ENCODE measurements at regions of chr3 and their contacts with region 1.

Region 1: GRCh38 chr3:187739561-187740332 is 5.5 kb downstream of the BCL6 start:
- DNase-seq: peak; percentile 88
- ATAC-seq: peak; percentile 18

Region 2: GRCh38 chr3:187783098-187783497 is 43.4 kb after region 1 on chr3:
- intact Hi-C with region 1: no loop called
- DNase-seq: peak; percentile 54
- ATAC-seq: peak; percentile 96

Region 3: GRCh38 chr3:187802928-187803259 is 63.1 kb after region 1 on chr3:
- intact Hi-C with region 1: no loop called
- DNase-seq: no peak
- ATAC-seq: no peak

Region 4: DNA sequence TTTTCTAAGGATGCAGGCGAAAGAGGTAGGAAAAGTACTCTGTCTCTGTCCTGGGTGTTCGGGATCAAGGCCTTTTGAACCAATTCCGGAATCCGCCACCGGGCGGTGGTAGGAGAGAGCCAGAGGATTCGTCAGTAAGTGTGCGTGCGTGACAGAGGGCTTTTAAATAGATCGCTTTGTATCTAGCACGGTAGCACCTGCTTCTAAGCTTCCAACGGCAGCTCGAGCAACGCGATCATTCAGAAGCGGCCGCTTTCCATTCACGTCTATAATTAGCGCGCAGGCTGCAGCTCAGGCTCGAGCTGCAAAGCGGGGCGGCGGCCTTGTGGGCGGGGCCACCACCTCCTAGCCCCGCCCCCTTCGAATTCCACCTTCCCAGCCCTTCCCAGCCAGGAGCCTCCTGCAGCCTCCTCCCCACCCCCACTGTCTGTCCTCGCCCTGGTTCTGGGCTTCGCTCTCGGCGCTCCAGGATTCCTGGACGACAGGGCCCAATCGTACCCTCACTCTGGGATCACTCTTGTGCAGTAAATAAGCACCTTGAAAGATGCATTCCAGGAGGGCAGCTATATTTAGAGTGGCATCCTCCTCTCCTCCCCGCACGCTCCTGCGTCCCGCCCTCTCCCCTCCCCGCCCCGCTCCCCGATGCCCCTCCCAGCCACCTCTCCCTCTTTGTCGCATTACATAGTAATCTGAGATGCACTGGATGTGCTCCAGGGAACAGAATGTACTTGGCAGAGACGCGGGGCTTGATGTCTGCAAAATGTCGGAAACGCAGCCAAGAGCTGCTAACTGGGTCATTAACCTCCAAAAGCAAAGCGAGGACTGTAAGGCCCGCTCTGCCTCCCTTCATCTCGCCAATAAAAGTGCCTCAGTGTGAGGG is 1207.9 kb after region 1 on chr3:
- intact Hi-C with region 1: loop called (anchors 2 kb)
- DNase-seq: peak; percentile 94
- ATAC-seq: peak; percentile 92

Region 5: GRCh38 chr3:189148081-189148507 is 1408.3 kb after region 1 on chr3:
- intact Hi-C with region 1: loop called (anchors 5 kb)
- DNase-seq: peak; percentile 57
- ATAC-seq: peak; percentile 81

Measured in Right ventricle myocardium superior (tissue), 1 donor.